Activated T-helper 1 cell treated with anti-CD3 and anti-CD28 coated beads, Interleukin-12 subunit alpha, Interleukin-12 subunit beta, Interleukin-2, Interleukin-4 antibody, amounts not matched to agents 30 ng/mL and 10 ng/mL and 1 ng/mL, durations not matched to agents 14 hours and 24 hours and 36 hours (primary cell): ENCODE measurements at regions of chr1 and their contacts with region 1.

Region 1: DNA sequence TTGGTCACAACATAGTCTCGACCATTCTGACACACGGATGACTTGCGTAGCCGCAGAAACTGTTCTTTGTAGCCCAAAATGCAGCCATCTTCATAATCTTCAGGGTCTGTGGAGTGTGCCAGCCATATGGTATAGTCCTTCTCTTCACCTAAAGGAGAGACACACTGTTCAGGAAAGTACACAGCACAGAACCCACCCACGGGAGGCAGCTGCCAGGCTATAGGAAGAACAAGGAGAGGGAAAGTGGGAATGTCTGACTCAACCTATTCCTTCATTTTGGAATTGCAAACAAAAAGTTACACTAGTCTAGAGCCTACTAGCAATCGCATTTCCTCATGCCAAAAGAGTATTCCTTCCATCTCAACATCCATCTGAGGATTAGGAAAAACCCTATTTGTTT is 16.2 kb upstream of the MYBPHL start:
- DNase-seq: no peak
- H3K4me3 Mint-ChIP-seq: no peak overlapping the region
- H3K27ac Mint-ChIP-seq: no peak overlapping the region
- H3K4me1 Mint-ChIP-seq: no peaks in the 10 kb centered on the region
- H3K27me3 Mint-ChIP-seq: peaks cover 4% of the 10 kb centered on the region

Region 2: DNA sequence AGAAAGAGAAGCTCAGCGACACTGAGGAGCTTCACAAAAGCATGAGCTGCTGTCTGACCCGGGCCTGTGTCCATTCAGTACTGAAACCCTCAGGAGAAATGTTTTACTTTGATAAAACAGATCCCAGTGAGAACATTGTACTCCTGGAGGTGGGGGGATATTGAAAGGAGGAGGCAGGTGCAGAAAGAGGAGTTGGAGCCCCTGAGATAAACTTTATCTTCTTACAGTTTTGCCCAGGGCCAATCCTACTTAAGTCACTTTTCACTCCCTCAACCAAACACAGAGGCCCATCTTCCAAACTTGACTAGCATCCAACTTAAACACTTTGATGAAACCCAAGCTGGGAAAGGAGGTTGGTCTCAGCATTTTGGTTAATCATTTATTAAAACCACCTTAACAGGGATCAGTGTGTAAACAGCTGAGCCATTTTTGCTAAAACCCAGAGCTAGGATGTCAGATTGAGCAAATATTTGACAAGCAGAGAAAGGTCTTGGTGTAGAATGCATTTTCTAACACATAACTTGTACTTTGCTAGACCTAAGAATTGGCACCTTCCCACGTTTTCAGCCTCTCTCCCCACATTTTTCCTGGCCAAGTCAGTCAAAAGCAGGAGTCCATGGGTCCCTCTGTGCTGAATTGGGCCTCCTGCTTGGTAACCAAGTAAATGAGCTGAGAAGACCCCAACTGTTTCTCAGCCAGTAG is 141.7 kb before region 1 on chr1:
- intact Hi-C with region 1: no loop called
- DNase-seq: no peak
- H3K4me3 Mint-ChIP-seq: no peak overlapping the region
- H3K27ac Mint-ChIP-seq: no peak overlapping the region
- H3K4me1 Mint-ChIP-seq: no peaks in the 10 kb centered on the region
- H3K27me3 Mint-ChIP-seq: no peaks in the 10 kb centered on the region

Region 3: GRCh38 chr1:109361649-109362048 is 38.7 kb after region 1 on chr1:
- intact Hi-C with region 1: loop called (anchors 5 kb)
- DNase-seq: no peak
- H3K4me3 Mint-ChIP-seq: no peak overlapping the region
- H3K27ac Mint-ChIP-seq: no peak overlapping the region
- H3K4me1 Mint-ChIP-seq: no peaks in the 10 kb centered on the region
- H3K27me3 Mint-ChIP-seq: peaks cover 33% of the 10 kb centered on the region

Region 4: DNA sequence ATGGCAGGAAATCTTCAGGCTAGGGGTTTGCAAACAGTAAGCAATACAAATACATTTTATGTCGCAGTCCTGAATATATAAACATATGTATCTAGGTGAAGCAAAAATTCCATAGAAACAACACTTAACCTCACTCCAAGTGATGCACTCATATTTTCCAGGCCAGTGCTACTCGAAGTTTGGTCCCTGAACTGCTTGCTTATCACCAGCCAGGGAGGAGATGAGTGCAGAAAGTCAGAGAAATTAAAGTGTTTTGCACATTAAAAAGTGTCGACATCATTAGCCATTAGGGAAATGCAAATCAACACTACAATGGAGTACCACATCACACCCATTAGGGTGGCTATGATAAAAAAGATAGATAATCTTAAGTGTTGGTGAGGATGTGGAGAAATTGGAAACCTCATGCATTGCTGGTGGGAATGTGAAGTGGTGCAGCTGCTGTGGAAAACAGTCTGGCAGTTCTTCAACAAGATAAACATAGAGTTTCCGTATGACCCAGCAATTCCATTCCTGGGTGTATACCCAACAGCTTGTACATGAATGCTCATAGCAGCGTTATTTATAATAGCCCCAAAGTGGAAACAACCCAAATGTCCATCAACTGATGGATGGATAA is 517.1 kb after region 1 on chr1:
- intact Hi-C with region 1: no loop called
- DNase-seq: no peak
- H3K4me3 Mint-ChIP-seq: no peak overlapping the region
- H3K27ac Mint-ChIP-seq: no peak overlapping the region
- H3K4me1 Mint-ChIP-seq: no peaks in the 10 kb centered on the region
- H3K27me3 Mint-ChIP-seq: peaks cover 7% of the 10 kb centered on the region